OCI-LY7 (cell line): ENCODE measurements at regions of chr17 and their contacts with region 1.

Region 1: GRCh38 chr17:22654447-22654846 is 962.1 kb downstream of the KCNJ18 start:
- DNase-seq: no peak
- H3K4me3 ChIP-seq: no peak overlapping the region
- H3K27ac ChIP-seq: no peak overlapping the region
- H3K4me1 ChIP-seq: no peaks in the 10 kb centered on the region
- CTCF ChIP-seq: no peak

Region 2: GRCh38 chr17:22717211-22717610 is 62.8 kb after region 1 on chr17:
- CTCF ChIA-PET with region 1: no interaction called
- POLR2A ChIA-PET with region 1: no interaction called
- intact Hi-C with region 1: loop called (anchors 10 kb)
- DNase-seq: no peak
- H3K4me3 ChIP-seq: no peak overlapping the region
- H3K27ac ChIP-seq: no peak overlapping the region
- H3K4me1 ChIP-seq: no peaks in the 10 kb centered on the region
- CTCF ChIP-seq: no peak